H1 (cell line): ENCODE measurements at regions of chr2 and their contacts with region 1.

Region 1: DNA sequence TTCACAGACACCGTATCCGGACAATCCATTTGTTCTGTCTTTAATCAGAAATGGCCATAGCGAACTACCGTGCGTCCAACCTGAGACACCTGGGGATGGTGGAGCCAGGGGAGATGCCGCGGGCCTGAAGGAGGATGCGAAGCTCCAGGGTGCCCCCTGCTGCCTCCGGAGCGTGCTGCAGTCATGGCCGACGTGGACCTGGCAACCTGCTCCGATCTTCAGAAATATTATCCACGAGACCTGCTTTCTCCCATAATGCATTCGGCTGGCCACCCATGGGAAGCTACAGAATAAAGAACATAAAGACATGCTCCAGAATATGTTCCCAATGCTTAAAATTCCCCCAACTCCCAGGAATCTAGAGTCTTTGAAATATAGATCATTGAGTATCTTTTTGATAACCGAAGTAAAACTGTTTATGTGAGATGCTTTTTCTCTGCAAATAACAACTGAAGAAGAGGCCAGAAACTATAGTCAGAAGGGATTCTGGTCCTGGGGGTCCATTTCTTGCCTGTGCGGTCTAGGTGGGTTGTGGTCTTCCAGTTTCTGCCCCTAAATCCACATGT is 30.7 kb upstream of the SLC66A3 start:
- DNase-seq: peak; percentile 47 to 97
- H3K4me3 ChIP-seq: no peak overlapping the region
- H3K27ac ChIP-seq: no peak overlapping the region
- H3K4me1 ChIP-seq: peaks cover 0 to 4% (median 0%) of the 10 kb centered on the region in 4 experiments; a peak in 5 of 7 replicates
- H3K27me3 ChIP-seq: peaks cover 0 to 3% (median 1%) of the 10 kb centered on the region in 4 experiments; a peak in 4 of 7 replicates
- CTCF ChIP-seq: peak; percentile 94 to 98 (median 94)
- EP300 ChIP-seq: no peak
- POLR2A ChIP-seq: no peak
- RAD21 ChIP-seq: peak; percentile 96

Region 2: DNA sequence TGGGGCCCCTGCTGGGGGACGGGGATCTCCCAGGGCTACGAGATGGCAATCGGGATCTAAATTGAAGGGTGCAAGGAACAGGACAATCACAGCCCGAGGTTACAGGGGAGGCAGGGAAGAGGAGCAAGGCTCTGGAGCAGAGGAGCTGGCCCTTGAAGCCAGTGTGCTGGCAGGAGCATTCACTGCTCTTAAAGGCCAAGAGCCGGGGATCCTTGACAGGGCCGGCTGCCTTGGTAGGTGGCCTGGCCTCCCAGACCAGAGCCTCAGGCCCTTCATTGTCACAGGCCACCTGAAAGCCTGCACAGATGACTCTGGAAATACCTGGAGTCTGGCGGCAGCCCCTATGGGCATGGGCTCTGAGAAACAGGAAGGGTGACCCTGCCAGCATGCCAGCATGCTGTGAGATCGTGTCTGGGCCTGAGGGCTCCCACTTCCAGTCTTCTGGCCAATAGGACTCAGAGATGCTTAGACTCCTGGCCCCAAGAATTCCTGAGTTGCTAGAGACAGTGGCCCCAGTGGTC is 350.7 kb before region 1 on chr2:
- CTCF ChIA-PET with region 1: no interaction called
- POLR2A ChIA-PET with region 1: no interaction called
- DNase-seq: no peak
- H3K4me3 ChIP-seq: no peak overlapping the region
- H3K27ac ChIP-seq: no peak overlapping the region
- H3K4me1 ChIP-seq: peaks cover 0 to 4% (median 2%) of the 10 kb centered on the region in 4 experiments; a peak in 3 of 7 replicates
- H3K27me3 ChIP-seq: no peaks in the 10 kb centered on the region
- CTCF ChIP-seq: no peak
- EP300 ChIP-seq: no peak
- POLR2A ChIP-seq: no peak
- RAD21 ChIP-seq: no peak

Region 3: DNA sequence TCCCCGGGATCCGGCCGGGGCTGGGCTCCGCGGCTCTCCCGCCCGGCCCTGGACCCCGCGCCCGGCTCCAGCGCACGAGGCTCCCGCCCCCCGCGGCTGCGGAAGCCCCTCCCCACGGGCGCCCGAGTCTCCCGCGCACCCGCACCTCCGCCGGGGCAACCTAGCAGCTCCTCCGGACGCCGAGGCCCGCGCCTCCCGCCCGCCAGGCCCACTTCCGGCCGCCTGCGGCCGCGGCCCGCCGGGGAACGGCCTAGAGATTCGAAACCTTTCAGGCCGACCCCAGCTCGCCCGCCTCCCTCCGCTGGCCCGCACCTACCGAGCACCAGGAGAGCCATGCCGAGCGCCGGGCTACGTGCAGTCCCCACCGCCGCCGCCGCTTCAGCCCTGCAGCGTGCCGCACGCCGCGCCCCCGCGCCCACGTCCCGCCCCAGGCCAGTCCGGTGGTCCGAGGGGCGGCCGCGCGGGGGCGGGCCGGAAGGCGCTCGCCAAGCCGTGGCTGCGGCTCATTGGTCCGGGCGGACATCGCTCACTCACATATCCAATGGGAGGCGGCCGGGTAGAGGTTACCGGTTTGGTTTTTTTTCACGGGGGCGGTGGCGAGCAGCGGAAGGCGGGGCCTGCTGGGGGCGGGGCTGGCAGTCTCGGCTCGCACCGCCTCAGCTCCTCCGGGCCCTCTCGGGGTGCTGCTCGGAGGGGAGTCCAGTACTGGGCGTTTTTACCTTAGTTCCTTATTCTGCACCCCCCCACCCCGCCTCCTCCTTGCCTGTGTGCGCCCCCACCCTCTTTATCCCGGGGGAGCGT is 312.0 kb before region 1 on chr2 and contains the start of gene PDIA6:
- CTCF ChIA-PET with region 1: interaction called, 21 read pairs
- POLR2A ChIA-PET with region 1: no interaction called
- DNase-seq: peak; percentile 82 to 99
- H3K4me3 ChIP-seq: peak within 1 kb of the TSS; percentile 56 to 87 (median 69)
- H3K27ac ChIP-seq: peak within 1 kb of the TSS; percentile 82; the same call in 1 of the 2 replicates
- H3K4me1 ChIP-seq: peaks cover 0 to 15% (median 4%) of the 10 kb centered on the region in 4 experiments; a peak in 6 of 7 replicates
- H3K27me3 ChIP-seq: no peaks in the 10 kb centered on the region; a peak in 2 of 7 replicates
- CTCF ChIP-seq: no peak
- EP300 ChIP-seq: no peak
- POLR2A ChIP-seq: peak; percentile 44 to 75
- RAD21 ChIP-seq: no peak
- total RNA-seq, gene PDIA6: 383 and 384 TPM in 2 replicates

Region 4: DNA sequence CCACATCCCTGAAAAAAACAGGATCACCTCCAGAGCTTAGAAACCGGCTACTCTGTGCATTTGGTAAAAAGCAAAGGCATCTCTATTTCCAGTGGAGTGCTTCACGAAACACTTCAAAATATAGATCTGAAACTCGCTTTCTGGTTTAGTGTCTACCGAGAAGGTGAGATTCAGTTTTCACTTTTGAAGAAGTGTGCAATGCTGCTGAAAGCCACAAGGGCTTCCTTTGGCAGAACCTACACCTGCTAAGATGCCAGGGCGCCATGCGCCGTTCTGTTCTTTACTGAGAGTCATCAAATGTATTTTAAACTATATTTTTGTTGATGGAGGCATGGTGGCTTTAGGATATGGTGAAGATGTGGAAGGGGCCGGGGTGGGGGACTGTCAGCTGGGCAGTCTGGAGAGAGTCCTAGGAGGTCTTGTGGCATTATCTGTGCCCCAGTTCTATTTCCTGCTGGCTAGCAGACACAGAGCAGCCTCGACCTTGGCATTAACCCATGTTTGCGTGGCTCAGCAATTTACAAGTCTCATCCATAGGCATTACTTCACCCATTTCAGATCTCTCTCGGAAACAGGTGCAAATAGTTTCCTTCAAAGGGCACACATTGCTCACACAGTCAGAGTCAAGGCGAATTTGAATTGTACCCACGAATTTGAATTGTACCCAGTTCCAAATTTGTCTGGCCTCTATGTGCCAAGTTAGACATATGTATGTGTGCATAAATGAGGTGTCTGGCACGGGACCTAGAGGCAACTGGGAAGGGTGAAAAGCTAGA is 259.5 kb before region 1 on chr2:
- CTCF ChIA-PET with region 1: interaction called, 11 read pairs
- POLR2A ChIA-PET with region 1: no interaction called
- DNase-seq: no peak
- H3K4me3 ChIP-seq: no peak overlapping the region
- H3K27ac ChIP-seq: no peak overlapping the region
- H3K4me1 ChIP-seq: peaks cover 0 to 3% (median 0%) of the 10 kb centered on the region in 4 experiments; a peak in 1 of 7 replicates
- H3K27me3 ChIP-seq: no peaks in the 10 kb centered on the region
- CTCF ChIP-seq: peak in 1 of 3 experiments; percentile 22; a peak in 1 of 4 replicates
- EP300 ChIP-seq: no peak
- POLR2A ChIP-seq: no peak
- RAD21 ChIP-seq: no peak

Region 5: GRCh38 chr2:10911261-10912075 is 213.1 kb before region 1 on chr2 and contains the start of gene KCNF1:
- CTCF ChIA-PET with region 1: interaction called, 35 read pairs
- POLR2A ChIA-PET with region 1: no interaction called
- DNase-seq: no peak
- H3K4me3 ChIP-seq: peak within 1 kb of the TSS; percentile 32 to 64 (median 46)
- H3K27ac ChIP-seq: no peak within 1 kb of the TSS
- H3K4me1 ChIP-seq: peaks cover 3 to 28% (median 10%) of the 10 kb centered on the region in 4 experiments
- H3K27me3 ChIP-seq: peaks cover 13 to 40% (median 29%) of the 10 kb centered on the region in 4 experiments; a peak in 6 of 7 replicates
- CTCF ChIP-seq: peak in 2 of 3 experiments; percentile 19 to 34; a peak in 2 of 4 replicates
- EP300 ChIP-seq: no peak
- POLR2A ChIP-seq: no peak
- RAD21 ChIP-seq: peak; percentile 36 to 39
- total RNA-seq, gene KCNF1: 0.48 and 0.90 TPM in 2 replicates

Region 6: GRCh38 chr2:11080253-11081115 is 44.1 kb before region 1 on chr2:
- CTCF ChIA-PET with region 1: interaction called, 23 read pairs
- POLR2A ChIA-PET with region 1: no interaction called
- DNase-seq: peak in 1 of 2 experiments; percentile 45
- H3K4me3 ChIP-seq: no peak overlapping the region
- H3K27ac ChIP-seq: no peak overlapping the region
- H3K4me1 ChIP-seq: peaks cover 0 to 6% (median 0%) of the 10 kb centered on the region in 4 experiments; a peak in 2 of 7 replicates
- H3K27me3 ChIP-seq: no peaks in the 10 kb centered on the region
- CTCF ChIP-seq: no peak
- EP300 ChIP-seq: no peak
- POLR2A ChIP-seq: no peak
- RAD21 ChIP-seq: no peak

Region 7: DNA sequence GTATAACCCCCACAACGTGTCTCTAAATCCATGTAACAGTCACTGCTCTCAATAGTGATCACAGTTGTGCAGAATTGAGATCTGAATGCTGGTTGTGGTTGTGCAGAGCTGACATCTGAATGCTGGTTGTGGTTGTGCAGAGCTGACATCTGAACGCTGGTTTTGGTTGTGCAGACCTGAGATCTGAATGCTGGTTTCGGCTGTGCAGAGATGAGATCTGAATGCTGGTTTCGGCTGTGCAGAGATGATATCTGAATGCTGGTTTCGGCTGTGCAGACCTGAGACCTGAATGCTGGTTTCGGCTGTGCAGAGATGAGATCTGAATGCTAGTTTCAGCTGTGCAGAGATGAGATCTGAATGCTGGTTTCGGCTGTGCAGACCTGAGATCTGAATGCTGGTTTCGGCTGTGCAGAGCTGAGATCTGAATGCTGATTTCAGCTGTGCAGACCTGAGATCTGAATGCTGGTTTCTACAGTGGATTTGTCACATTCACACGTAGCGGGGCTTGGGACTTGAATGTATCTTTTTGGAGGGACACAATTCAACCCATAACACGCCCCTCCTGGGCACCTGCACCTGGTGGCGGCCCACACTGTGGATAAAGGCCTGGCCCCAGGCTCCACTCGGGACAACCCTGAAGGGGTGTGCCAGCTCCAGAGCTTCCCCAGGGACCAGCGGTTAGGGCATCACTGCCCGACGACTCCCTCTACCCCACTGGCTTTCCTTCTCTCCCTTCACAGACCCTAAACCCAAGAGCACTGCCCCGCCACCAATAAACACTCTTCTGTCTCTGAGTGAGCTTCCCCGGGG is 20.4 kb before region 1 on chr2:
- CTCF ChIA-PET with region 1: interaction called, 84 read pairs
- POLR2A ChIA-PET with region 1: no interaction called
- DNase-seq: no peak
- H3K4me3 ChIP-seq: no peak overlapping the region
- H3K27ac ChIP-seq: no peak overlapping the region
- H3K4me1 ChIP-seq: no peaks in the 10 kb centered on the region
- H3K27me3 ChIP-seq: no peaks in the 10 kb centered on the region
- CTCF ChIP-seq: no peak
- EP300 ChIP-seq: no peak
- POLR2A ChIP-seq: no peak
- RAD21 ChIP-seq: no peak

Region 8: GRCh38 chr2:11286749-11287148 is 162.2 kb after region 1 on chr2:
- CTCF ChIA-PET with region 1: no interaction called
- POLR2A ChIA-PET with region 1: no interaction called
- DNase-seq: no peak
- H3K4me3 ChIP-seq: no peak overlapping the region
- H3K27ac ChIP-seq: no peak overlapping the region
- H3K4me1 ChIP-seq: no peaks in the 10 kb centered on the region
- H3K27me3 ChIP-seq: no peaks in the 10 kb centered on the region
- CTCF ChIP-seq: no peak
- EP300 ChIP-seq: no peak
- POLR2A ChIP-seq: no peak
- RAD21 ChIP-seq: no peak